ENCODE measurements at regions of chr10 and their contacts with region 1.

Region 1: DNA sequence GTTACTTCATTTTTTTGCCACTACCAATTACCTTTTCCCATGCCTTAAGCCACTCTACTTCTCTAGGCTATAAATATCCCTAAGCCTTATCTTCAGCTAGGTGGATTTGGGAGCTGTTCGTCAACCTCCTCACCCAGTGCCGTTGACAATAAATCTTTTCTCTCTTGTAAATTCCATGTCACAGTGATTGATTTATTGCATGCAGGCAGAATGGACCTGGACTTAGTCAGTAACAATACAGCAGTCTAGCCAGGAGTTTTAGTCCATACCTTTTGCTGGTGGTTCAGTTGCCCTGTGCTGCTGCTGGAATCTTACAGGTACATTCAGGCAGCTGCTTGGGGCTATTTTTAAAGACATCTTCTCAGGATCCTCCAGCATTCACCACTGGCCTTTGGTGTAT is 350.5 kb upstream of the NRG3 start:
- DNase-seq: no peak
- ATAC-seq: no peak

Region 2: GRCh38 chr10:81439445-81439844 is 85.0 kb before region 1 on chr10:
- intact Hi-C with region 1: loop called (anchors 10 kb)
- DNase-seq: no peak
- ATAC-seq: no peak

Region 3: DNA sequence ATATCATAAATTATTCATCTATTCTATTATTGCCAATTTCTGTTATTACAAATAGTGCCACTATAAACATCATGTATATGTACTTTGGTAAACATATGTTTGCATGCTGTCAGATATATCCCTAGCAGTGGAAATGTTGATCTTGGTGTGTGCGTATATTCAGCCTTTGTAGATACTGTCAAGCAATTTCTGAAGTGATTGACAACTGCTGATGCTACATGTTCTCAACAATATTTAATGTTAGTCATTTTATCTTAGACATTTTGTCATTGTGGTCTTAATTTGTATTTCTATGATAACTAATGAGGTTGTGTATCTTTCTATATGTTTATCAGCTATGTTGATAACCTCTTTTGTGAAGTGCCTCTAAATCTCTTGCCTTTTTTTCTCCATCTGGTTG is 164.0 kb after region 1 on chr10:
- intact Hi-C with region 1: no loop called
- DNase-seq: no peak
- ATAC-seq: no peak